GM12878 (cell line): ENCODE measurements at regions of chr5 and their contacts with region 1.

Region 1: GRCh38 chr5:59126708-59127573 is 544.1 kb downstream of the RAB3C start:
- DNase-seq: no peak
- ATAC-seq: no peak
- H3K4me3 ChIP-seq: no peak overlapping the region; the same call in 1 of the 2 replicates
- H3K27ac ChIP-seq: no peak overlapping the region
- H3K4me1 ChIP-seq: no peaks in the 10 kb centered on the region; the same call in 1 of the 2 replicates
- H3K27me3 ChIP-seq: no peaks in the 10 kb centered on the region; a peak in 1 of 4 replicates
- CTCF ChIP-seq: no peak
- EP300 ChIP-seq: no peak
- POLR2A ChIP-seq: no peak
- RAD21 ChIP-seq: no peak

Region 2: GRCh38 chr5:59034498-59035186 is 92.3 kb before region 1 on chr5:
- CTCF ChIA-PET with region 1: interaction called, 11 read pairs
- POLR2A ChIA-PET with region 1: no interaction called
- RAD21 ChIA-PET with region 1: interaction called, 3 read pairs
- SMC1A ChIA-PET with region 1: interaction called, 7 read pairs
- in situ Hi-C with region 1: no loop called
- intact Hi-C with region 1: loop called (anchors 2 kb)
- DNase-seq: no peak
- ATAC-seq: peak; percentile 70
- H3K4me3 ChIP-seq: no peak overlapping the region
- H3K27ac ChIP-seq: no peak overlapping the region
- H3K4me1 ChIP-seq: peaks cover 5% of the 10 kb centered on the region; the same call in 1 of the 2 replicates
- H3K27me3 ChIP-seq: peaks cover 7 to 21% of the 10 kb centered on the region in 2 experiments
- CTCF ChIP-seq: peak; percentile 45 to 64 (median 56)
- EP300 ChIP-seq: no peak
- POLR2A ChIP-seq: no peak
- RAD21 ChIP-seq: peak; percentile 59

Region 3: DNA sequence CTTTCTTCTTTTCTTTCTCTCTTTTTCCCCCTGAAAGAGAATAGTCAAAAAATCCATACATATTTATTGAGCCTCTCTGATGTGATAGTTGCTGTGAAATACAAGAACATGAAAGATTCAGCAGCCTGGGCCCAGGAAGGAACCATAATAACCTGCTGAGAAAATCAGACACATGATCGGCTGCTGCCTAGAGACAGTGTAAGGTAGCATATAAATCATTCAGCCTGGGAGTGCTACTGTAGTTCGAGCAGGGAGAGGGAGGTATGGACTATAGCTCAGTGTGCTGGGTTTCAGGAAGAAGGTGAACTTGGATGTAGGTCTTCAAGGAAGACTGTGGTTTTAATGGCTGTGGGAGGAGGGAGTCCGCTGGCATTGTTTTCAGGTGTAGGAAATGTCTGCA is 75.0 kb before region 1 on chr5:
- CTCF ChIA-PET with region 1: no interaction called
- POLR2A ChIA-PET with region 1: no interaction called
- RAD21 ChIA-PET with region 1: no interaction called
- SMC1A ChIA-PET with region 1: no interaction called
- in situ Hi-C with region 1: no loop called
- intact Hi-C with region 1: no loop called
- DNase-seq: no peak
- ATAC-seq: no peak
- H3K4me3 ChIP-seq: no peak overlapping the region
- H3K27ac ChIP-seq: no peak overlapping the region
- H3K4me1 ChIP-seq: no peaks in the 10 kb centered on the region
- H3K27me3 ChIP-seq: no peaks in the 10 kb centered on the region
- CTCF ChIP-seq: no peak
- EP300 ChIP-seq: no peak
- POLR2A ChIP-seq: no peak
- RAD21 ChIP-seq: no peak